Psoas muscle (tissue), 8 donors: ENCODE measurements at regions of chr17 and their contacts with region 1.

Region 1: GRCh38 chr17:76314392-76315227 is 6.5 kb upstream of the QRICH2 start:
- DNase-seq: no peak
- ATAC-seq: peak in 3 of 4 donors; percentile 19 to 37 (median 37)
- H3K4me3 ChIP-seq: no peak overlapping the region
- H3K27ac ChIP-seq: no peak overlapping the region
- H3K4me1 ChIP-seq: no peaks in the 10 kb centered on the region
- H3K27me3 ChIP-seq: no peaks in the 10 kb centered on the region
- CTCF ChIP-seq: no peak

Region 2: GRCh38 chr17:76353599-76354316 is 39.1 kb after region 1 on chr17 and contains the start of gene PRPSAP1:
- intact Hi-C with region 1: no loop called
- DNase-seq: peak; percentile 88 to 94
- ATAC-seq: peak; percentile 97 to 99 (median 98)
- H3K4me3 ChIP-seq: peak within 1 kb of the TSS; percentile 90
- H3K27ac ChIP-seq: peak within 1 kb of the TSS; percentile 91
- H3K4me1 ChIP-seq: peaks cover 11% of the 10 kb centered on the region
- H3K27me3 ChIP-seq: no peaks in the 10 kb centered on the region
- CTCF ChIP-seq: peak; percentile 55
- total RNA-seq, gene PRPSAP1: 14.8 to 20.0 (median 18.1) TPM

Region 3: GRCh38 chr17:76365256-76365903 is 50.8 kb after region 1 on chr17:
- intact Hi-C with region 1: loop called in 1 of 2 experiments (anchors 10 kb)
- DNase-seq: no peak
- ATAC-seq: no peak
- H3K4me3 ChIP-seq: no peak overlapping the region
- H3K27ac ChIP-seq: no peak overlapping the region
- H3K4me1 ChIP-seq: peaks cover 4% of the 10 kb centered on the region
- H3K27me3 ChIP-seq: peaks cover 0 to 17% (median 0%) of the 10 kb centered on the region in 3 donors
- CTCF ChIP-seq: no peak